MCF 10A (cell line): ENCODE measurements at regions of chr21 and their contacts with region 1.

Region 1: GRCh38 chr21:33682992-33683627 is 40.8 kb downstream of the ITSN1 start:
- DNase-seq: peak; percentile 90
- H3K4me3 Mint-ChIP-seq: peak overlapping the region; percentile 55
- H3K27ac Mint-ChIP-seq: peak overlapping the region; percentile 92
- H3K4me1 Mint-ChIP-seq: peaks cover 39% of the 10 kb centered on the region
- H3K27me3 Mint-ChIP-seq: no peaks in the 10 kb centered on the region
- CTCF ChIP-seq: no peak

Region 2: DNA sequence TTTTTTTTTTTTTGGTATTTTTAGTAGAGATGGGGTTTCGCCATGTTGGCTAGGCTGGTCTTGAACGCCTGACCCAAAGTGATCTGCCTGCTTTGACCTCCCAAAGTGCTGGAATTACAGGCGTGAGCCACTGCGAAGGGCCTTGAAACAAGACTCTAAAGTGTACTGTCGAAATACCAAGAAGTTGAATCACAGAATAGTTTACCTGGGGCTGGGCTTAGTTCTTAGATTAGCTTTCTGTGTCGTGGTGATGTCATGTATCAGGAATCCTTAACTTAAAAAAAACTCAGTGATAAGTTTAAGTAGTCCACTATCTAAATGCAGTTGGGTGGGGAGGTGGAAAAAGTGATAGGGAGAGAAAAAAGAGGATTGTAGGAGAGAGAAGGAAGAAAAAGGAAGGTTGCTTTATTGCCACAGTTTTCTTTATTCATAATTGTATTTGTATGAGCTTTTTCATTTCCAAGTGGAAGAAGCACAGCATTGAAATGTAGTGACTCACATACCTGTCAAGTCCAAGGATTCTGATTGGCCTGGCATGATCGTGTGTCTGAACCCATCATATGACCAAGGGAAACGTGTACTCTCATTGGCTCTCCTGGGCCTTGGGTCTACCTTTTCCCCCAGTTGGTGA is 27.4 kb before region 1 on chr21:
- CTCF ChIA-PET with region 1: no interaction called
- POLR2A ChIA-PET with region 1: interaction called, 17 read pairs
- intact Hi-C with region 1: no loop called
- DNase-seq: peak; percentile 81
- H3K4me3 Mint-ChIP-seq: peak overlapping the region; percentile 24
- H3K27ac Mint-ChIP-seq: peak overlapping the region; percentile 82
- H3K4me1 Mint-ChIP-seq: peaks cover 28% of the 10 kb centered on the region
- H3K27me3 Mint-ChIP-seq: no peaks in the 10 kb centered on the region
- CTCF ChIP-seq: no peak

Region 3: GRCh38 chr21:33666153-33666552 is 17.0 kb before region 1 on chr21:
- CTCF ChIA-PET with region 1: interaction called, 3 read pairs
- POLR2A ChIA-PET with region 1: interaction called, 12 read pairs
- intact Hi-C with region 1: no loop called
- DNase-seq: no peak
- H3K4me3 Mint-ChIP-seq: no peak overlapping the region
- H3K27ac Mint-ChIP-seq: no peak overlapping the region
- H3K4me1 Mint-ChIP-seq: peaks cover 17% of the 10 kb centered on the region
- H3K27me3 Mint-ChIP-seq: no peaks in the 10 kb centered on the region
- CTCF ChIP-seq: no peak

Region 4: GRCh38 chr21:33698087-33698860 is 15.2 kb after region 1 on chr21:
- CTCF ChIA-PET with region 1: interaction called, 3 read pairs
- POLR2A ChIA-PET with region 1: interaction called, 12 read pairs
- intact Hi-C with region 1: no loop called
- DNase-seq: no peak
- H3K4me3 Mint-ChIP-seq: no peak overlapping the region
- H3K27ac Mint-ChIP-seq: no peak overlapping the region
- H3K4me1 Mint-ChIP-seq: no peaks in the 10 kb centered on the region
- H3K27me3 Mint-ChIP-seq: no peaks in the 10 kb centered on the region
- CTCF ChIP-seq: no peak

Region 5: DNA sequence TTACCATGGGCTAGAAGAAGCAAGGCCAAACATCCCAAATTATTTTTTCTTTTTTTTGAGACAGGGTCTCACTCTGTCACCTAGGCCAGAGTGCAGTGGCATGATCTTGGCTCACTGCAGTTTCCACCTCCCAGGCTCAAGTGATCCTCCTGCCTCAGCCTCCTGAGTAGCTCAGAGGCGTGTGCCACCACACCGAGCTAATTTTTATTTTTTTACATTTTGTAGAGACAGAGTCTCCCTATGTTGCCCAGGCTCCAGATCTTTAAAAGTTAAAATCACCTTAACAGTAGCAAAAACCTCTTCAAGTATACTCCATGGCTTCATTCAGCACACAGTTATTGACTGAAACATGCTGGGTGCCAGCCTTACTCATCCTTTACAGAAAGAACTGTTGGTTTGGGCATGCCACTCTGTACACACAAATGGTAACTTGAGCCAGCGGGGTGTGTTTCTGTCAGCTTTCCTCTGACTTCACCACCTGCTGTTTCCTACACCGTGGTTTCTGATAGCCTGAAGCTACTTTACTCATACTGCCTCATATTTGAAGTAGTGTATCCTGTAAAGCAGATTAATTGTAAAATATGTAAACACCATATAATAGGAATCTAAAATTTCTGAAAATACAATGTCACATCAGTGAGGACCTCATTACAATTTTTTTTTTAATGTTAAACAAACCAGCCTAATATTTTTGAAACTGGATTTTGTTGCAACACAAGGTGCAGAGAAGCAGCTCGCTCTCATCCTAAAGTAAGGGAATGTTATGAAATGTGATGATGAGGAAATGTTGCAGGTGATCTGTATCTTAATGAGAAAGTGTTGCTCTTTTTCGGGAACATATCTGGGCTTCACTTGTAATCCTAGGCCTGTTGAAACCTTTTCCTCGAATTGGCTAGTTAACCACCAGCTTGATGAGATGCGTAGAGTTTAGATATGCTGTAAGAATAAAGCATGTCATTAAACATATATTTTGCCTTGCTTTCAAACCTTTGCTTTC is 118.6 kb after region 1 on chr21:
- CTCF ChIA-PET with region 1: interaction called, 3 read pairs
- POLR2A ChIA-PET with region 1: interaction called, 21 read pairs
- intact Hi-C with region 1: no loop called
- DNase-seq: peak; percentile 97
- H3K4me3 Mint-ChIP-seq: peak overlapping the region; percentile 51
- H3K27ac Mint-ChIP-seq: peak overlapping the region; percentile 87
- H3K4me1 Mint-ChIP-seq: peaks cover 21% of the 10 kb centered on the region
- H3K27me3 Mint-ChIP-seq: no peaks in the 10 kb centered on the region
- CTCF ChIP-seq: no peak